Transverse colon (tissue), 4 donors: ENCODE measurements at regions of chr14 and their contacts with region 1.

Region 1: GRCh38 chr14:25955772-25956171 is 642.1 kb downstream of the NOVA1 start:
- DNase-seq: no peak
- H3K4me3 ChIP-seq: no peak overlapping the region
- H3K27ac ChIP-seq: no peak overlapping the region
- H3K4me1 ChIP-seq: no peaks in the 10 kb centered on the region
- H3K27me3 ChIP-seq: no peaks in the 10 kb centered on the region
- CTCF ChIP-seq: no peak
- EP300 ChIP-seq: no peak
- POLR2A ChIP-seq: no peak

Region 2: DNA sequence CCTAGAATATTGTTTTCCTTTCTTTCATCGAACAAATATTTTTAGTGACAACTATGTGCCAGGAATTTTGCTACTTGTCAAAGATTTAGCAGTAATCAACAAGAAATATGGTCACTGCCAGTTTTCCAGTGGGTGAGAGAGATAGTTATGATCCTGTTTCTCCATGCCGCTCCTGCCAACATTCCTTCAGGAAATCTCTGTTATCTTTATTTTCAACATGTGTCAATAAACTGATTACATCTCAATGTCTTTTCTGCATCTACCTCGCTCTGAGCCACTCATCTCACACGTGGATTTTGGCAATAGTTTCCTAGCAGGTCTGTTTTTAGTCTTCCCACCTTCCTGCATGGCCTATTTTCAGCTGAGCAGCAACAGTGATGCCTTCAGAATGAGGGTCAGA is 255.8 kb before region 1 on chr14:
- in situ Hi-C with region 1: no loop called
- intact Hi-C with region 1: no loop called
- DNase-seq: no peak
- H3K4me3 ChIP-seq: no peak overlapping the region
- H3K27ac ChIP-seq: no peak overlapping the region
- H3K4me1 ChIP-seq: no peaks in the 10 kb centered on the region
- H3K27me3 ChIP-seq: no peaks in the 10 kb centered on the region
- CTCF ChIP-seq: no peak
- EP300 ChIP-seq: no peak
- POLR2A ChIP-seq: no peak

Region 3: DNA sequence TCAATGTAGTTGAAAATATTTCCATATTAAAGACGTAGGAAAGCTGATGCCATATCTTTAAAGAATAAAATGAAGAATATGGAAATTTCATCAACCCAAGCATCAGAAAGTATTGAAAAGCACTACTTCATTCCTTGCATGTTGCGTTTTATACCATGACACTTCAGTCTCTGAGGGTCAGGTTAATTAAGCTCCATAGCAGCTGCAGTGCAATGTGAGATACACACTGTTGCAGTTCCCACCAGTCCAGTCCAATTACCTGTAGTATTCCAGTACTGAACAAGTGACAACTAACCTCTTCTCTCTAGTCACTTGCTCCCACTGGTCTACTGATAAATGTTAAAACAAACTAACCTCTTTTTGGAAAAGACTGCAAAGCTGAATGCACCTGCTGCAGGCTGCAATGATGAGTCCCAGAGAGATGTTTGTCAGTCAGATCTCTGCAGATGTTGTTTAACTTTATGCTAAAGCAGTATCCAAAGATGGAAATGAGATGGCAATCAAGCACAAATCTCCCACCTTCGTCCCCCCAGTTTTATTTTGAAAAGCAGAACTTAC is 634.1 kb after region 1 on chr14:
- in situ Hi-C with region 1: no loop called
- intact Hi-C with region 1: loop called (anchors 5 kb)
- DNase-seq: no peak
- H3K4me3 ChIP-seq: no peak overlapping the region
- H3K27ac ChIP-seq: no peak overlapping the region
- H3K4me1 ChIP-seq: peaks cover 0 to 3% (median 0%) of the 10 kb centered on the region in 4 donors
- H3K27me3 ChIP-seq: no peaks in the 10 kb centered on the region
- CTCF ChIP-seq: no peak
- EP300 ChIP-seq: no peak
- POLR2A ChIP-seq: no peak